ENCODE measurements at regions of chr9 and their contacts with region 1.

Region 1: GRCh38 chr9:133184962-133185361 is 21.2 kb upstream of the GBGT1 start:
- DNase-seq: peak; percentile 75
- H3K4me3 ChIP-seq: no peak overlapping the region
- H3K27ac ChIP-seq: no peak overlapping the region
- H3K4me1 ChIP-seq: no peaks in the 10 kb centered on the region
- H3K27me3 ChIP-seq: peaks cover 2% of the 10 kb centered on the region
- CTCF ChIP-seq: peak; percentile 63 to 76

Region 2: GRCh38 chr9:133041958-133042357 is 143.0 kb before region 1 on chr9:
- CTCF ChIA-PET with region 1: no interaction called
- dilution Hi-C with region 1: no loop called
- in situ Hi-C with region 1: no loop called
- intact Hi-C with region 1: loop called (anchors 1 kb)
- DNase-seq: no peak
- H3K4me3 ChIP-seq: no peak overlapping the region
- H3K27ac ChIP-seq: no peak overlapping the region
- H3K4me1 ChIP-seq: no peaks in the 10 kb centered on the region
- H3K27me3 ChIP-seq: no peaks in the 10 kb centered on the region
- CTCF ChIP-seq: no peak

Region 3: DNA sequence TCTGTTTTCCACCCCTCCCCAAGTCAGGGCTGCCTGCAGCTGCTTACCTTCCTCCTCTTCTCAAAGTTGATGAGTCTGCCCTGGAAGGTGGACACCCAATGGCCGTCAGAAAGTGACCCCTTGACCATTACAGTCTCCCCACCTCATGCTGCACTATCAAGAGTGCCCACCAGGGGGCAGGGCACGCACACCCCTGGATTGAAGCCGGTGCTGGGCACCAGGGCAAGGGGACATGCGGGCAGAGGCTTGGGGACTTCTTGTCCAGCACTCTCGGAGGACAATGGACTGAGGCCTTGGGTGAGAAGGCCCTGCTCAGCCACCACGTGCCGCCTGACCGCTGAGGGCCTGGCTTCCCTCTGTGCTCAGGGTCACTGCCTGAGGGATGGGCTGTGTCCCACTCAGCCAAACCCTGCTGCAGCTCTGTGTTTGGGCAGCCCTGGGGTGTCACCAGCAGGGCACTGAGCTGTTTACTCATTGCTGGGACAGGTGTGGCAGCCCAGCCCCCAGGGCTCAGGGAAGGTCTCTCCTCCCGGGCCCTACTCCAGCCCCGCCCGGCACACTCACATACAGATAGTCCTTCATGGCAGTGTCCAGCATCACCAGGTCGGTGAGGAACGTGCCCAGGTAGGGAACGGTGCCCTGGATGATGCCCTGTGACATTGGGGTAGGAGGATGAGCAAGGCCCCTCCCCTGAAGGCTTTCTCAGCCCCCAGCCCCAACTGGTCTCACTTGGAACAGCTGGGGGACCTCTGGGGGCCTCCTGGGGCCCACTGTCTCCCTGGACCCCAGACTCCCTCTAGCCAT is 81.6 kb before region 1 on chr9:
- CTCF ChIA-PET with region 1: no interaction called
- dilution Hi-C with region 1: no loop called
- in situ Hi-C with region 1: no loop called
- intact Hi-C with region 1: loop called (anchors 1 kb)
- DNase-seq: no peak
- H3K4me3 ChIP-seq: no peak overlapping the region
- H3K27ac ChIP-seq: no peak overlapping the region
- H3K4me1 ChIP-seq: no peaks in the 10 kb centered on the region
- H3K27me3 ChIP-seq: no peaks in the 10 kb centered on the region
- CTCF ChIP-seq: peak; percentile 93 to 94

Region 4: GRCh38 chr9:133149126-133150107 is 35.5 kb before region 1 on chr9:
- CTCF ChIA-PET with region 1: no interaction called
- dilution Hi-C with region 1: no loop called
- in situ Hi-C with region 1: no loop called
- intact Hi-C with region 1: no loop called
- DNase-seq: peak; percentile 92
- H3K4me3 ChIP-seq: peak overlapping the region; percentile 12 to 98 (median 86)
- H3K27ac ChIP-seq: peak overlapping the region; percentile 88
- H3K4me1 ChIP-seq: peaks cover 16% of the 10 kb centered on the region
- H3K27me3 ChIP-seq: no peaks in the 10 kb centered on the region
- CTCF ChIP-seq: peak in 1 of 2 donors; percentile 50

Region 5: GRCh38 chr9:133320421-133320881 is 135.5 kb after region 1 on chr9:
- CTCF ChIA-PET with region 1: no interaction called
- dilution Hi-C with region 1: no loop called
- in situ Hi-C with region 1: loop called in 1 of 2 experiments (anchors 5 kb)
- intact Hi-C with region 1: no loop called
- DNase-seq: no peak
- H3K4me3 ChIP-seq: no peak overlapping the region
- H3K27ac ChIP-seq: no peak overlapping the region
- H3K4me1 ChIP-seq: no peaks in the 10 kb centered on the region
- H3K27me3 ChIP-seq: no peaks in the 10 kb centered on the region
- CTCF ChIP-seq: no peak

Region 6: DNA sequence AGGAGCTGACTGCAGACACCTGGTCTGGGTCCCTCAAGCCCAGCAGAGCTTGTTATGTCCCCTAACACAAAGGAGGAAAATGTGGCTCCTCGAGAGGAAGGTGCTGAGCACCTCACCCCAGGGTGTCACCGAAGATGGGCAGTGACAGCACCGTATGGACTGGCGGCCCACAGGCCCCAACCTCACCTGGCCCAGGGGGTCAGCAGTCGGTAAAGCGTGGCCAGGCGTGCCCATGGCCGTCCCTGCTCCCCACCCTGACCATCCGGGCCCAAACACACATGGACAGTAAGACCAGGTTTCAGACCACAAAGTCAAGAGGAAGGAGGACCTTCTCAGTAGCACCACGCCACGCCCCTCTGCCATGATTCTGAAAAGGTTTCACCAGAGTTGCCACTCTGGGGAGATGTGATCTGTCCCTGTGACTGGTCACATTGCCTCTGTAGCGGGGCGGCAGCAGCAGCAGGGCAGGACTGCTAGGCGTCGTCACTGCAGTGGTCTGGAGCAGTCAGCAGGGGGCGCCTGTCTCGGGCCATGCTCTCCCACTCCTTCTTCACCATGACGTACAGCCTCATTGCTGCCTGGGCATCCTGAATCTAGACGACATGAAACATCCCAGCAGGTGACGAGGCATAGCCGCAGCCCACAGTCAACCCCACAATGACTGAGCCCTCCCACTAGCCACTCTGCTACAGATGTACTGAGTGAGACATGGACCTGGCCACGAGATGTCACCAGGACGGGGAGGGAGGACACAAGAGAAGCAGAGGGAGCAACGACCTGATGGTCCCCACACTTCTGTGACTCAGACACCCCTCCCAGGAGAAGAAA is 221.7 kb after region 1 on chr9:
- CTCF ChIA-PET with region 1: no interaction called
- dilution Hi-C with region 1: no loop called
- in situ Hi-C with region 1: loop called in 1 of 2 experiments (anchors 10 kb)
- intact Hi-C with region 1: loop called (anchors 1 kb)
- DNase-seq: peak; percentile 58
- H3K4me3 ChIP-seq: no peak overlapping the region
- H3K27ac ChIP-seq: no peak overlapping the region
- H3K4me1 ChIP-seq: no peaks in the 10 kb centered on the region
- H3K27me3 ChIP-seq: no peaks in the 10 kb centered on the region
- CTCF ChIP-seq: peak; percentile 90 to 95

Region 7: GRCh38 chr9:133634081-133634691 is 449.2 kb after region 1 on chr9:
- CTCF ChIA-PET with region 1: no interaction called
- dilution Hi-C with region 1: no loop called
- in situ Hi-C with region 1: no loop called
- intact Hi-C with region 1: no loop called
- DNase-seq: no peak
- H3K4me3 ChIP-seq: no peak overlapping the region
- H3K27ac ChIP-seq: no peak overlapping the region
- H3K4me1 ChIP-seq: no peaks in the 10 kb centered on the region
- H3K27me3 ChIP-seq: no peaks in the 10 kb centered on the region
- CTCF ChIP-seq: no peak